ENCODE measurements at regions of chr16 and their contacts with region 1.

Region 1: DNA sequence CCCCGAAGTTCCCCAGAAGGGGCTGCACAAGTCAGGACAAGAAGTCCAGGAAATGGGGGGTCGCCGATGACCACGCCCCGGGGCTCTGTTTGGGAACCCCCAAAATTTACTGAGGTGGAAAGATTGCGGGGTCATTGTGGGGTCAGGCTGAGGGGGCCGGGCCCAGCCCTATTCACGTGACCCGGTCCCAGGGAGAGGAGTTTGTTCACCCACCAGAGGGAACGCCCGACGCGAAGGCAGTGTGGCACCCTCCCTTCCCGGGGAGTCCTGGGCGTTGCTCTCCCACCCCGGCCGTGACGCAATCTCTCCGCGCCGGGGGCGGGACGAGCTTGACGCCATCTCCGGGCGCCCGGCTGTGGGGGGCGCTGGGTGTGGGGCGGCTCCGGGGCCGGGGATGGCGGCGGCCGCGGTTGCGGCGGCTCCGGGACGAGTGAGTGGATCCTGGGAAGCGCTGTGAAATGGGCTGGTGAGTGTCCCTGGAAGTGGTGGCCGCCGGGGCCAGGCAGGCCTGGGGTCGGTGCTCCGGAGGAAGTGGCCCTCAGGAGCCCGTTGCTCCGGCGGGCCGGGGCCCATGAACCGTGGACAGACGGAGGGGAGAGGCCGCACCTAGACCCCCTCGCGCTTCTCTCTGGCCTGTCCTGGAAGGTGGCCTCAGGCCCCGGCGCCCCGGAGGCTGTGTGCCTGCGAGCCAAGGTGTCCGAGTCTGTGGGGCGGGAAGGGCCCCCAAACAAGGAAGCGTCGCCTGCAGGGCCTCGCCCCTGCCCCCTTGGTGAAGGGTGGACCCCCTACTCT is at the start of gene ATXN1L:
- DNase-seq: peak; percentile 96
- total RNA-seq, gene ATXN1L: 26.5 to 26.9 TPM

Region 2: GRCh38 chr16:71811261-71811803 is 34.5 kb before region 1 on chr16:
- intact Hi-C with region 1: loop called in 1 of 2 experiments (anchors 5 kb)
- DNase-seq: no peak

Measured in posterior vena cava (tissue), 2 donors.